Posterior cingulate gyrus (tissue), 11 donors: ENCODE measurements at regions of chr2 and their contacts with region 1.

Region 1: GRCh38 chr2:235588750-235589149 is 94.9 kb downstream of the AGAP1 start:
- DNase-seq: no peak

Region 2: GRCh38 chr2:234564699-234565098 is 1024.1 kb before region 1 on chr2:
- intact Hi-C with region 1: loop called (anchors 10 kb)
- DNase-seq: no peak

Region 3: GRCh38 chr2:235421618-235422017 is 167.1 kb before region 1 on chr2:
- intact Hi-C with region 1: no loop called
- DNase-seq: peak in 1 of 10 donors; percentile 84